WTC11 (cell line): ENCODE measurements at regions of chr21 and their contacts with region 1.

Region 1: GRCh38 chr21:39388038-39388810 is 39.3 kb upstream of the HMGN1 start:
- DNase-seq: peak; percentile 98
- ATAC-seq: peak; percentile 90
- H3K4me3 Mint-ChIP-seq: peak overlapping the region; percentile 70
- H3K27ac Mint-ChIP-seq: peak overlapping the region; percentile 95
- H3K4me1 Mint-ChIP-seq: peaks cover 24% of the 10 kb centered on the region
- H3K27me3 Mint-ChIP-seq: no peaks in the 10 kb centered on the region
- CTCF ChIP-seq: peak; percentile 88

Region 2: GRCh38 chr21:39313571-39314142 is 74.6 kb before region 1 on chr21 and contains the start of gene BRWD1:
- CTCF ChIA-PET with region 1: interaction called, 11 read pairs
- POLR2A ChIA-PET with region 1: interaction called, 6 read pairs
- DNase-seq: peak; percentile 75
- ATAC-seq: peak; percentile 18
- H3K4me3 Mint-ChIP-seq: peak within 1 kb of the TSS; percentile 91
- H3K27ac Mint-ChIP-seq: peak within 1 kb of the TSS; percentile 98
- H3K4me1 Mint-ChIP-seq: peaks cover 13% of the 10 kb centered on the region
- H3K27me3 Mint-ChIP-seq: no peaks in the 10 kb centered on the region
- CTCF ChIP-seq: no peak
- total RNA-seq, gene BRWD1: 48.8 to 53.3 TPM (median 52.5 TPM) in 3 replicates

Region 3: GRCh38 chr21:39373644-39374043 is 14.6 kb before region 1 on chr21:
- CTCF ChIA-PET with region 1: interaction called, 12 read pairs
- POLR2A ChIA-PET with region 1: interaction called, 5 read pairs
- DNase-seq: no peak
- ATAC-seq: peak; percentile 83
- H3K4me3 Mint-ChIP-seq: no peak overlapping the region
- H3K27ac Mint-ChIP-seq: peak overlapping the region; percentile 20
- H3K4me1 Mint-ChIP-seq: peaks cover 12% of the 10 kb centered on the region
- H3K27me3 Mint-ChIP-seq: no peaks in the 10 kb centered on the region
- CTCF ChIP-seq: no peak